HCT116 (cell line): ENCODE measurements at regions of chr22 and their contacts with region 1.

Region 1: GRCh38 chr22:20663941-20664593 is 109.8 kb upstream of the SERPIND1 start:
- DNase-seq: no peak
- ATAC-seq: no peak
- H3K4me3 ChIP-seq: no peak overlapping the region
- H3K27ac ChIP-seq: no peak overlapping the region
- H3K4me1 ChIP-seq: no peaks in the 10 kb centered on the region
- H3K27me3 ChIP-seq: peaks cover 17% of the 10 kb centered on the region; the same call in 1 of the 2 replicates
- CTCF ChIP-seq: no peak
- POLR2A ChIP-seq: no peak
- RAD21 ChIP-seq: no peak

Region 2: DNA sequence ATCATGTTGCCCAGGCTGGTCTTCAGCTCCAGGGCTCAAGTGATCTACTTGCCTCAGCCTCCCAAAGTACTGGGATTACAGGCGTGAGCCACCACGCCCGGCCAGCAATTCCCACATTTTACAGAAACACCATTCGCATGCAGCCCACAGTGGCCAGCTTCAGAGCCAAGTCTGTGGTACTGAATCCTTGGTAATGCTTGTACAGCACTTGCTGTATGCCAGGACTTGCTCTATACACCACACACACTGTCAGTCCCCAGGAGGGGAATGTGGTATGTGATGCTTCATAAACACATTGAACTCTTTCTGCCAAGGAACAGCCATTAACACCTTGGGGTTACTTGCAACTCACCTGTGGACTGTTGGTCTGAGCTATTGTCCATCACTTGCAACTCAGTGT is 37.3 kb before region 1 on chr22:
- CTCF ChIA-PET with region 1: no interaction called
- POLR2A ChIA-PET with region 1: no interaction called
- RAD21 ChIA-PET with region 1: no interaction called
- intact Hi-C with region 1: no loop called
- DNase-seq: no peak
- ATAC-seq: no peak
- H3K4me3 ChIP-seq: no peak overlapping the region
- H3K27ac ChIP-seq: no peak overlapping the region
- H3K4me1 ChIP-seq: no peaks in the 10 kb centered on the region
- H3K27me3 ChIP-seq: 0 out of 2 replicates have a peak, but pooled peaks cover 6% of the 10 kb centered on the region
- CTCF ChIP-seq: no peak
- POLR2A ChIP-seq: no peak
- RAD21 ChIP-seq: no peak

Region 3: DNA sequence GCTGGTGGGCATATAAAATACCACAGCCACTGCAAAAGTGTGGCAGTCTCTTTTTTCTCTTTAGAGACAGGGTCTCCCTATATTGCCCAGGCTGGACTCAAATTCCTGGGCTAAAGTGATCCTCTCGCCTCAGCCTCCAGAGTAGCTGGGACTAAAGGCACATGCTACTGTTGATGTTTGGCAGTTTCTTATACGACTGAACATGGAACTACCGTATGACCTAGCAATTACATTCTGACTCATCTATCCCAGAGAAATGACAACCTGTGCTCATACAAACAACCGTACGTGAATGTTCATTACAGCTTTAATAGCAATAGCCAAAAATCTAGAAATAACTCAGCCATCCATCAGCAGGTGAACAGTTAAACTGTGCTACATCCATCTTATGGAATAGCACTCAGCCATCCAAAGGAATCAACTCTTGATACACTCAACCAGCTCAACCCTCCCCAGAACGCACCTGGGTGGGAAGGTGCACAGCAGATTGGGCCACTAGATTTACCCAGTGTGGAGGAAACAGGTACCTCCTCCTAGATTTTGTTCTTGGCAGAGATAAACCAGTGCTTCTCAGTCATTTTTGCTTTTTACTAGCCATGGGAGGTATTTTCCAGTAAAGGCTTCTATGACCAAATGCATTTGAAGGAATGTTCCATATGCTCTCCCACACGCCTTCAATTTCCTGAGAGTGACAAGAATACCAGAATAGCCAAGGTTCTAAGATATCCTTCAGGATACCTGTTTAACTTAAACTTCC is 26.1 kb before region 1 on chr22:
- CTCF ChIA-PET with region 1: no interaction called
- POLR2A ChIA-PET with region 1: no interaction called
- RAD21 ChIA-PET with region 1: no interaction called
- intact Hi-C with region 1: loop called (anchors 2 kb)
- DNase-seq: no peak
- ATAC-seq: no peak
- H3K4me3 ChIP-seq: no peak overlapping the region
- H3K27ac ChIP-seq: no peak overlapping the region
- H3K4me1 ChIP-seq: no peaks in the 10 kb centered on the region
- H3K27me3 ChIP-seq: 0 out of 2 replicates have a peak, but pooled peaks cover 12% of the 10 kb centered on the region
- CTCF ChIP-seq: no peak
- POLR2A ChIP-seq: no peak
- RAD21 ChIP-seq: no peak